ENCODE measurements at regions of chr1 and their contacts with region 1.

Region 1: GRCh38 chr1:241896670-241896962 is 48.6 kb downstream of the EXO1 start:
- DNase-seq: no peak
- ATAC-seq: no peak
- H3K4me3 ChIP-seq: no peak overlapping the region
- H3K4me3 Mint-ChIP-seq: no peak overlapping the region
- H3K27ac ChIP-seq: no peak overlapping the region
- H3K27ac Mint-ChIP-seq: no peak overlapping the region
- H3K4me1 ChIP-seq: no peaks in the 10 kb centered on the region
- H3K4me1 Mint-ChIP-seq: no peaks in the 10 kb centered on the region
- H3K27me3 ChIP-seq: no peaks in the 10 kb centered on the region
- H3K27me3 Mint-ChIP-seq: no peaks in the 10 kb centered on the region
- CTCF ChIP-seq: no peak

Region 2: DNA sequence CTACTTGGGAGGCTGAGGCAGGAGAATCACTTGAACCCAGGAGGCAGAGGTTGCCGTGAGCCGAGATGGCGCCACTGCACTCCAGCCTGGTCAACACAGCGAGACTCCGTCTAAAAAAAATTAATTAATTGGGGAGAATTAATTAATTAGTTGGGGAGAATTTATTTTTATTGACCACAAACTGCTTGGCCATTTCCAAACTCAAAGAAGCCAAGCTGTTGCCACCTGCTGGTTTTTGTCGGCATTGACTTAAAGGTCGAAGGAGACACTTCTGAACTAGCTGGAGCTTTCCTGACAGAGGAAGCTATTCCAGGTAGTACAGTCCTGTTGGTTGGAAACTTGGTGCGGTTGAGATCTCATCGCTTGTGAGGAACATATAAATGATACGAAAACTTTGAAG is 89.2 kb after region 1 on chr1:
- intact Hi-C with region 1: loop called (anchors 1 kb)
- DNase-seq: peak in 1 of 2 donors; percentile 24
- ATAC-seq: no peak
- H3K4me3 ChIP-seq: no peak overlapping the region
- H3K4me3 Mint-ChIP-seq: no peak overlapping the region
- H3K27ac ChIP-seq: no peak overlapping the region
- H3K27ac Mint-ChIP-seq: no peak overlapping the region
- H3K4me1 ChIP-seq: no peaks in the 10 kb centered on the region
- H3K4me1 Mint-ChIP-seq: no peaks in the 10 kb centered on the region
- H3K27me3 ChIP-seq: no peaks in the 10 kb centered on the region
- H3K27me3 Mint-ChIP-seq: no peaks in the 10 kb centered on the region
- CTCF ChIP-seq: peak; percentile 32

Region 3: DNA sequence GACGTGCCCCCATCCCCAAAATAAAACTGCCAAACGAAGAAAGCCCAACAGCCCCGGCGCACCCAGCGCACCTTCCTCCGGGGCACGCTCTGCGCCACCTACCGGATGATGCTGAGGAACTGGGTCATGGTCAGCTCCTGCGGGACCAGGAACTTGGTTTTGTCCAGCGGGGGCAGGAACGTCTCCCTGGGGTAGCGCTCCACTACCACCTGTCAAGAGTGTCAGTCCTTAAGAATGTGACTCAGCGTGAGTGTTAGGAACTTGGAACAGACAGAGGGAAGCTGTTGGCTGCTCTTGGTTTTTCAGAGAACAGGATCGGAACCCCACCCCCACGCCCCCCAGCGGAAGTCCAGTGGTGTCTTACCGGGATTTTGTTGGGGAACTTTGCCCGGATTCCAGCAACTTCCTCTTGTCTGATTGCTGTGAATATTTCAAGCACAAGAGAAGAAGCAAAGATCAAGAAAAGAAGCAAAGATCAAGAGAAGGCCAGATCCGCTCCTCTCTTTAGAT is 101.9 kb after region 1 on chr1:
- intact Hi-C with region 1: loop called (anchors 1 kb)
- DNase-seq: peak; percentile 39 to 61
- ATAC-seq: peak; percentile 60 to 85 (median 76)
- H3K4me3 ChIP-seq: no peak overlapping the region
- H3K4me3 Mint-ChIP-seq: peak overlapping the region; percentile 66
- H3K27ac ChIP-seq: no peak overlapping the region
- H3K27ac Mint-ChIP-seq: no peak overlapping the region
- H3K4me1 ChIP-seq: peaks cover 4% of the 10 kb centered on the region
- H3K4me1 Mint-ChIP-seq: peaks cover 6% of the 10 kb centered on the region in 2 donors
- H3K27me3 ChIP-seq: no peaks in the 10 kb centered on the region
- H3K27me3 Mint-ChIP-seq: no peaks in the 10 kb centered on the region
- CTCF ChIP-seq: peak; percentile 78